PC-9 (cell line): ENCODE measurements at regions of chrX and their contacts with region 1.

Region 1: DNA sequence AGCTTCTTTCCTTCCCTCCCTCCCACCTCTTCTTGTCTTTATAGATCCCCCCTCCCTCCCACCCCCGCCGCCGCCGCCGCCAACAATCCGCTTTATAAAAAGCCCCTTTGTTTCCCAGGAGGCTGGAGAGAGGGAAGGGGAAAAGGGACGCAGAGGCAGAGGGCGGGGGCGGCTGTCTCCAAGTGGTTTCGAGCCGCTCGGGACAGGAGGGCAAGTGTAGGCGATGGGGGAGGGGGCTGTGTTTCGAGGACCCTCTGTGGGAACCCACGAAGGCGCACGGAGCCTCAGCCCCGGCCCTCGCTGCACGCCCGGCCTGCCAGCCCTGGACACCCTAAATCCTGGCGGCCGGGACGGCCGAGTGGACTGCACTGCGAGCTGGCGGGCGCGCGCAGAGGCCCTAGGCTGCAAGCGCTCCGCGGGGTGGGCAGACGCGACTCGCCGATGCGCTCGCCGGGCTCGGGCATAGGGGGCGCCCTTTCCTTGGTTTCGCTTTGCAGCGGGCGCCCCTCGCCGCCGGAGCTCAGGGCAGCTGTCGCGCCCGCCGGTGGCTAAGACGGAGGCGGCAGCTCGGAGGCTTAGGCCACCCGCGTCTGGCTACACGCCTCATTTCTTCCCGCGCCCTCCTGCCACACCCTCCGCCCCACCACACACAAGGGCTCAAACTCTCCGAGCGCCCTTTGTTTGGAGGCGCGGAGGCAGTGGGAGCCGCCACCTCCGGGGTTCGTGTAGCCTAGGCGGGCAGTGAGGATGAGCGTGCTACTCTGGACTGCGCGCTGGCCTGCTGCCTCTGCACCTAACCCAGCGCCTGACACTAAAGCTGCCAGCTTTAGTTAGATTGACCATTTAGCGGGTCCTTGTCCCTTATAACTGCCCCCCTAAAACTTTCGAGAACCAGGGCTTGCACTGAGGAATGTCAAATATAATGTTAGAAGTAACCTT is 2.2 kb downstream of the MAMLD1 start:
- DNase-seq: peak in 1 of 2 experiments; percentile 74
- H3K4me3 ChIP-seq: peak overlapping the region; percentile 92
- H3K27ac ChIP-seq: no peak overlapping the region
- H3K4me1 ChIP-seq: peaks cover 7% of the 10 kb centered on the region; the same call in 1 of the 2 replicates
- H3K27me3 ChIP-seq: peaks cover 17% of the 10 kb centered on the region; the same call in 1 of the 2 replicates
- CTCF ChIP-seq: peak; percentile 71

Region 2: GRCh38 chrX:149962859-149963757 is 402.2 kb before region 1 on chrX:
- CTCF ChIA-PET with region 1: no interaction called
- POLR2A ChIA-PET with region 1: no interaction called
- intact Hi-C with region 1: loop called (anchors 1 kb)
- DNase-seq: peak; percentile 48 to 55
- H3K4me3 ChIP-seq: no peak overlapping the region
- H3K27ac ChIP-seq: no peak overlapping the region; the same call in 1 of the 2 replicates
- H3K4me1 ChIP-seq: no peaks in the 10 kb centered on the region
- H3K27me3 ChIP-seq: no peaks in the 10 kb centered on the region
- CTCF ChIP-seq: peak; percentile 95

Region 3: DNA sequence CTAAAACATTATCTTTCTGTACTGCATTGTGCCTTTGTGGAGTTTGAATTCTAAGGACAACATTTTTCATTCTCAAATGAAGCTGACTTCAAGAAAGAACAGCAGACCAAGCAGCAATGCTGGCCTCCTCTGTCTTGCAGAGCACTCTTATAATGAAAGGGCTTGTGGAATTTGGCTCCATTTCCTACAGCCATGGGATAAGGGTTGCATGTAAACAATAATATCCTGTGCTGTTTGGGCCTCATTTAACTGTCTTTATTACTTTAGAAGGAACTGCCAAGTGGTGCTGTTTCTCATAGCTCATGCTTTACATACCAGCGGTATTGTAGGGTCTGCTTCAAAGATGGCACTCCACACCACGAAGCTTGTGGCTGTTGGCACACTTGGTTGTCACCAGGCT is 315.7 kb before region 1 on chrX:
- CTCF ChIA-PET with region 1: no interaction called
- POLR2A ChIA-PET with region 1: no interaction called
- intact Hi-C with region 1: loop called (anchors 5 kb)
- DNase-seq: no peak
- H3K4me3 ChIP-seq: no peak overlapping the region
- H3K27ac ChIP-seq: no peak overlapping the region
- H3K4me1 ChIP-seq: peaks cover 31% of the 10 kb centered on the region
- H3K27me3 ChIP-seq: no peaks in the 10 kb centered on the region
- CTCF ChIP-seq: no peak

Region 4: DNA sequence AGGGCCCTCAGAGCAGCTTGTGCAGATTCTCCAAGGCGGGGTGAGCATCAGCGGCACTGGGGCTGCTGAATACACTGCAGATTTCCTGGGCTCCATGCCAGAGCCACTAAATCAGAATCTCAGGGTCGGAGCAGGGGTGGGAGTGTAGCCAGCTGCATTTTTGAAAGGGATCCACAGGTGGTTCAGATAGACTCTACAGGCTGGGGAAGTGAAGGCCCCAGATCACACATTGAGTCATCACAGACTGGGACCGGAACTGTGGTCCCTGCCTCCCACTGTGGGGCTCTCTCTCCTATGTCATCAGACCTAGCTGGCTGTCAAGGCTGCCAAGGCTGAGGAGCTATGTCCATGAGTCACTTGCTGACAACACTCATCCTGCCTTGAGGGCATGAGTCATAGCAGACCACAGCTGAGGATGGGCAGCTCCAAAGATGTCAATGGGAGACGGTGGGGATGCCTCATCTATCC is 164.5 kb before region 1 on chrX:
- CTCF ChIA-PET with region 1: interaction called, 8 read pairs
- POLR2A ChIA-PET with region 1: no interaction called
- intact Hi-C with region 1: loop called (anchors 1 kb)
- DNase-seq: peak; percentile 85 to 98
- H3K4me3 ChIP-seq: no peak overlapping the region
- H3K27ac ChIP-seq: no peak overlapping the region
- H3K4me1 ChIP-seq: peaks cover 15% of the 10 kb centered on the region
- H3K27me3 ChIP-seq: no peaks in the 10 kb centered on the region
- CTCF ChIP-seq: no peak

Region 5: DNA sequence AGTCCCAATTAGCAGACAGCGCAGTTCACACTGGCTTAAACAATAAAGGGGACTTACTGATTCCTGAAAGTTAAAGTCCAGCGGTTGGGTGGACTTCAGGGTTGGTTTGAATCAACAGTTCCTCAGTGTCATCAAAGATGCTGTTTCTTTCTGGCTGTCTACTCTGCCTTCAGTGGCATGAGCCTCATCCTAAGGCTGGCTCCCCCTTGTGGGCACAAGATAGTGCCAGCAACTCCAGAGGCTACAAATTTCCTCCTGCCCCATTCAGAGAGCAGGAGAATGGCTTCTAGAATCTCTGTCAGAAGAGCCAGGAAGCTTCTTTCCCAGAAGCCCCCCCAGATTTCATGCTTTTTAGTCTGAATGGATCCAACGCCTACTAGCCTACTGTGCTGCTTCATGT is 120.7 kb after region 1 on chrX:
- CTCF ChIA-PET with region 1: interaction called, 4 read pairs
- POLR2A ChIA-PET with region 1: no interaction called
- intact Hi-C with region 1: loop called (anchors 2 kb)
- DNase-seq: peak; percentile 33 to 46
- H3K4me3 ChIP-seq: no peak overlapping the region
- H3K27ac ChIP-seq: no peak overlapping the region
- H3K4me1 ChIP-seq: peaks cover 17% of the 10 kb centered on the region
- H3K27me3 ChIP-seq: no peaks in the 10 kb centered on the region
- CTCF ChIP-seq: peak; percentile 85

Region 6: DNA sequence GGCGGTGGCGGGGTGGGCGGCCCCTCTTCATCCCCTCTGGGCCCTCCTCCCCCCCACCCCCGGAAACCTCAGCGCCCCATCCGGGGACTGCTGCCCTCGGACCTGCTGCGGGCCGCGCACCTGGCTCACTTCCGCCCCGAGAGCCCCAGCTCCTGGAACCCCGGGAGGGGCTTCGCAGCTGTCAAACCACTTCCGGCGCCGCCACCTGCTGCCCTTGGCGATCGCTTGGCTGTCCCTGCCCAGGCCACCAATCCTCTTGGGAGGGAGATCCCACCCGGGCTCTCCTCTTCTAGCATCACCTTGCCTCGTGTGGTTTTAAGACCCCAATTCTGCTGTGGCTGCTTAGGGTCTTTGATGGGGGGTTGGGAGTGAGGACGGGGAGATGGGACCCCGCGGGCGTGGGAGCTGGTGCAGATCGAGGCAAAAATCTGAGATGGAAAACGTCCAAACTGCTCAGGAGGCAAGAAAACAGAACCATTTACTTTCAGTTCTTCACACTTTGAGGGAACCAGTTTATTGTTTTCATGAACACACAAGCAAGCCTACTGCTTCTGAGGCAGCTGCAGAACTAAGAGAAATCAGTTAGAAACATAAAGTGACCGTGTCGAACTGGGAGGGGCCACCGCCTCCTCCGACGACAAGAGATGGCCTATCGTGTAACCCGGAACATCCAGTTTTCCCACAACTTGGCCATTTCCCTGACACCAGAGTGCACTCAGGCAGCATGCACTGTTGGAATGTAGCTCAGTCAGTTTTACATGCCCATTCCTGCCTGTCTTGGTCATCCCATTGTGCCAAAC is 328.7 kb after region 1 on chrX:
- CTCF ChIA-PET with region 1: no interaction called
- POLR2A ChIA-PET with region 1: no interaction called
- intact Hi-C with region 1: loop called (anchors 1 kb)
- DNase-seq: peak; percentile 88 to 99
- H3K4me3 ChIP-seq: peak overlapping the region; percentile 75
- H3K27ac ChIP-seq: peak overlapping the region; percentile 93
- H3K4me1 ChIP-seq: peaks cover 50% of the 10 kb centered on the region
- H3K27me3 ChIP-seq: no peaks in the 10 kb centered on the region
- CTCF ChIP-seq: 0 out of 2 replicates have a peak, but pooled peaks have one; percentile 16